Activated B cell treated with CpG ODN at 0.5 μM for 24 hours (primary cell): ENCODE measurements at regions of chr22 and their contacts with region 1.

Region 1: DNA sequence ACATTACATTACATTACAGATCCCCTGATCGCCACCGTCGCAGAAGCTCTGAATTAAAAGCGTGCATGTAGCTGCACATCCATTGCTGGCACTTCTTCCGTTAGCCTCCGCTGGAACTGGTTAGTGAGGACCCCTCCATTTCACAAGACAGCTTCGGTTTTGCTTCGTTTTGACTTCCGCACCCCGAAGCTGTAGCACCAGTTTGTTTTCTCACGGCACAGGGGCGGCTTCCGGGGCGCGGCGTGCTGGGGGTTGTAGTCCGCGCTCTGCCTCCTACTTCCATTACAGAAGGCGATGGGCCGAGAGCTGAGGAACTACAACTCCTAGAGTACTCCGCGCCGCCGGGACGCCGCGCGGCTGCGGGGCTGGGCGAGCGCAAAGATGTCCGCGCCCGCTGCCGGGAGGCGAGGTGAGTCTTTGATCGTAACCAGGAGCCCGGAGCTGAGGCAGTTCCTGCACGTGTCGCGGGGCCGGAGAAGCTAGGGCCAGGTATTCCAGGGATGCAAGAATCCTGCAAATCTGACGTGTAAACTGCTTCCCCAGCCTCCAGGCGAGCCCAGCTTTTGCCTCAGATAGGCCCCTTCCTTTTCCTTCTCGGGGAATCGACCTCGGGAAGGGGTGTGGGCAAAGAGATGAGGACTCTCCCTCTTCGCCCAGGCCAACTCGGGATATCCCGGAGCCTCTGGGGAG is at the start of gene PEX26:
- DNase-seq: peak; percentile 84
- ATAC-seq: peak; percentile 98
- H3K4me3 Mint-ChIP-seq: peak within 1 kb of the TSS; percentile 95
- H3K27ac Mint-ChIP-seq: peak within 1 kb of the TSS; percentile 97
- H3K4me1 Mint-ChIP-seq: peaks cover 50% of the 10 kb centered on the region
- H3K27me3 Mint-ChIP-seq: no peaks in the 10 kb centered on the region
- CTCF ChIP-seq: no peak
- total RNA-seq, gene PEX26: 31.5 and 35.2 TPM in 2 replicates

Region 2: DNA sequence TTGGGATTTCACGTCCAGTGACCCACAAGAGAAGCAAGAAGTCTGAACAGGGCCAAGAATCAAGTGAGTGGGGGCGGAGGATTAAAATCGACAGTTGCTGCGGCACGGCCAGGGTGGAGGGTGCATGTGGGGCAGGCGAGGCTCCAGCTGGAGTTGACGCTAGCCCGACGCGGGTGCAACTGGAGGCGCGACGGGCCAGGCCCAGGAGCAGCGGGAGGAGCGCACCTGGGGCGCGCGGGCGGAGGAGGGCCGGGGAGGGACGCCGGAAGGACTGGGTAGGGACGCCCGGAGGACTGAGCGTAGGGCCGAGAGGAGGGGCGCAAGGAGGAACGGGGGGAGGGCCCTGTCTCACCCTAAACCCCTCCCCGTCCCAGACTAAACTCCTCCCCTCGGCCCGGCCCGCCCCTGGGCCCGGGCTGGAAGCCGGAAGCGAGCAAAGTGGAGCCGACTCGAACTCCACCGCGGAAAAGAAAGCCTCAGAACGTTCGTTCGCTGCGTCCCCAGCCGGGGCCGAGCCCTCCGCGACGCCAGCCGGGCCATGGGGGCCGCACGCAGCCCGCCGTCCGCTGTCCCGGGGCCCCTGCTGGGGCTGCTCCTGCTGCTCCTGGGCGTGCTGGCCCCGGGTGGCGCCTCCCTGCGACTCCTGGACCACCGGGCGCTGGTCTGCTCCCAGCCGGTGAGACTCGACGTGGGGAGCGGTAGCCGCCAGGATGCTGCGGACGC is 993.1 kb before region 1 on chr22 and contains the start of gene IL17RA:
- CTCF ChIA-PET with region 1: no interaction called
- POLR2A ChIA-PET with region 1: no interaction called
- intact Hi-C with region 1: loop called (anchors 10 kb)
- DNase-seq: peak; percentile 96
- ATAC-seq: peak; percentile 99
- H3K4me3 Mint-ChIP-seq: peak within 1 kb of the TSS; percentile 89
- H3K27ac Mint-ChIP-seq: peak within 1 kb of the TSS; percentile 81
- H3K4me1 Mint-ChIP-seq: peaks cover 40% of the 10 kb centered on the region
- H3K27me3 Mint-ChIP-seq: no peaks in the 10 kb centered on the region
- CTCF ChIP-seq: no peak
- total RNA-seq, gene IL17RA: 15.7 and 18.1 TPM in 2 replicates

Region 3: GRCh38 chr22:17638432-17639246 is 439.1 kb before region 1 on chr22 and contains the start of gene BCL2L13:
- CTCF ChIA-PET with region 1: no interaction called
- POLR2A ChIA-PET with region 1: interaction called, 3 read pairs
- intact Hi-C with region 1: loop called (anchors 1 kb)
- DNase-seq: peak; percentile 87
- ATAC-seq: peak; percentile 93
- H3K4me3 Mint-ChIP-seq: peak within 1 kb of the TSS; percentile 88
- H3K27ac Mint-ChIP-seq: peak within 1 kb of the TSS; percentile 94
- H3K4me1 Mint-ChIP-seq: peaks cover 28% of the 10 kb centered on the region
- H3K27me3 Mint-ChIP-seq: no peaks in the 10 kb centered on the region
- CTCF ChIP-seq: no peak
- total RNA-seq, gene BCL2L13: 30.1 and 38.7 TPM in 2 replicates

Region 4: GRCh38 chr22:17797721-17798559 is 279.8 kb before region 1 on chr22:
- CTCF ChIA-PET with region 1: interaction called, 3 read pairs
- POLR2A ChIA-PET with region 1: interaction called, 10 read pairs
- intact Hi-C with region 1: no loop called
- DNase-seq: peak; percentile 41
- ATAC-seq: peak; percentile 62
- H3K4me3 Mint-ChIP-seq: peak overlapping the region; percentile 49
- H3K27ac Mint-ChIP-seq: peak overlapping the region; percentile 99
- H3K4me1 Mint-ChIP-seq: peaks cover 87% of the 10 kb centered on the region
- H3K27me3 Mint-ChIP-seq: no peaks in the 10 kb centered on the region
- CTCF ChIP-seq: no peak

Region 5: DNA sequence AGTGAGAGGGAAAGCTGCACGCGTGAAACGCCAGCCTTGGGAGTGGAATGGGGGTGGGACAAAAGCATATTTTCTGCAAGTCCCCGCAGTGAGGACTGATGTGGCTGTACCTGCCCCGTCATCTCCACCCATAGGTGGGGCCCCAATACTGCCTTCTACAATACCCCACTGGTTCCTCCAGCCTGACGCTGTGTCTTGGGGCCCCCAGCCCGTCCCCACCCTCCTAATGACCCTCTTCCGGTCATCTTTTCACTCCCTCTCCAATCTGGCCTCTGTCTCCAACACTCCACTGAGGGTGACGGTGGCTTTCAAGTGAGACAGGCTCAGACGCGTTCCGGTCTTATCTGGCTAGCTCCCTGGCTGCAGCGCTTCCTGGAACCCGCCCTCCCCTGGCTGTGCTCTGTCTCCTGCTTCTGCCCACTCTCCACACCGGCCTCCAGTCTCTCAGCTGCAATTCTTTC is 157.6 kb before region 1 on chr22:
- CTCF ChIA-PET with region 1: interaction called, 7 read pairs
- POLR2A ChIA-PET with region 1: no interaction called
- intact Hi-C with region 1: loop called (anchors 1 kb)
- DNase-seq: no peak
- ATAC-seq: peak; percentile 50
- H3K4me3 Mint-ChIP-seq: peak overlapping the region; percentile 29
- H3K27ac Mint-ChIP-seq: peak overlapping the region; percentile 33
- H3K4me1 Mint-ChIP-seq: no peaks in the 10 kb centered on the region
- H3K27me3 Mint-ChIP-seq: no peaks in the 10 kb centered on the region
- CTCF ChIP-seq: no peak

Region 6: DNA sequence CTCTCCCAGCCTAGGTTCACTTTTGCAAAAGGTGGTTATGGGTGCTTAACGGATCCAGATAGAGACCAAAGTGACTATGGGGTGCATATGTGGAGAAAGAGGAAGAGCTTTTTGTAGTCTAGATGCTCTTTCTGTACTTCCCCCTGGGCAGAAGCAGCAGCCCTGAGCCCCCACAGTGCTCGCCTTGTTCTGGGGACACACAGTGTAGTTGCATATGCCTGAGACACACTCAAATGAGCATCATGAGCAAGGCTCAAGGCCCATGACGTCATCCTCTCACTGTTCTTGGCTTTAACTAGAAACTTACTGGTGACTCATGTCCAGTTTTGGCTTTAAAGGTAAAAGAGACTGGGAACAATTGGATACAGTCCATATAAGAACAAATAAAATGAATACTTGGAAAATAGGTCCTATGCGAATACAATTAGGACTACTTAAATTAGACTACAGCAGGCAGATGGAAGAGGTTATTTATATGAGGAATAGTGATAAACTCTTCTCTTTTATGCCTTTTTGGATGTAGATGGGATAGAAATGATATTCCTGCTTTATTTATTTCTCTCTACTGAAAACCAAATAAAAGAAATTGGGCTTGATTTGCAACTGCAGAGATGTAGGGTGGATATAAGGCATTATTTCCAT is 20.1 kb before region 1 on chr22:
- CTCF ChIA-PET with region 1: interaction called, 44 read pairs
- POLR2A ChIA-PET with region 1: interaction called, 50 read pairs
- intact Hi-C with region 1: loop called (anchors 1 kb)
- DNase-seq: peak; percentile 53
- ATAC-seq: peak; percentile 83
- H3K4me3 Mint-ChIP-seq: peak overlapping the region; percentile 71
- H3K27ac Mint-ChIP-seq: peak overlapping the region; percentile 97
- H3K4me1 Mint-ChIP-seq: peaks cover 49% of the 10 kb centered on the region
- H3K27me3 Mint-ChIP-seq: no peaks in the 10 kb centered on the region
- CTCF ChIP-seq: no peak

Region 7: DNA sequence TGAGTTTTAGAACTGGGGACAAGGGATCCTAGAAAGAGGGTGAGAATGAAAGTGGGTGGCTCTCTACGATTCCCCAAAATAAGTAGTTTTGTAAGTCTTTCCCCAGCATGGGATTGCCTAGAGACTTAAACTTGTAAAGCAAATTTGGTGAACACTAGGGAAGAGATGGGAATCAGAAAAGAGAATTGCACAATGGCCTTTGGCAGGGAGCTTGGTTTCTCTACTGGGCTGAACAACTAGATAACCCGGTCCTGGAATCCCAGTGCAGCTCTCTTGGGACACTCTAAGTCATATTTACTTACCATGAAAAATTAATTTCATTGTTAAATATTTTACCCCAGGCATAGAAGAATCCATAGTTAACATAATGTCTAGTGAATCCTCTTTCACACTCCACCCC is 55.7 kb after region 1 on chr22:
- CTCF ChIA-PET with region 1: no interaction called
- POLR2A ChIA-PET with region 1: no interaction called
- intact Hi-C with region 1: no loop called
- DNase-seq: no peak
- ATAC-seq: no peak
- H3K4me3 Mint-ChIP-seq: no peak overlapping the region
- H3K27ac Mint-ChIP-seq: no peak overlapping the region
- H3K4me1 Mint-ChIP-seq: no peaks in the 10 kb centered on the region
- H3K27me3 Mint-ChIP-seq: no peaks in the 10 kb centered on the region
- CTCF ChIP-seq: no peak